Aorta (tissue), 5 donors: ENCODE measurements at regions of chr16 and their contacts with region 1.

Region 1: GRCh38 chr16:83433201-83433600 is 374.6 kb upstream of the HSBP1 start:
- DNase-seq: no peak
- ATAC-seq: no peak
- H3K4me3 ChIP-seq: no peak overlapping the region
- H3K27ac ChIP-seq: no peak overlapping the region
- H3K4me1 ChIP-seq: no peaks in the 10 kb centered on the region
- H3K27me3 ChIP-seq: no peaks in the 10 kb centered on the region

Region 2: DNA sequence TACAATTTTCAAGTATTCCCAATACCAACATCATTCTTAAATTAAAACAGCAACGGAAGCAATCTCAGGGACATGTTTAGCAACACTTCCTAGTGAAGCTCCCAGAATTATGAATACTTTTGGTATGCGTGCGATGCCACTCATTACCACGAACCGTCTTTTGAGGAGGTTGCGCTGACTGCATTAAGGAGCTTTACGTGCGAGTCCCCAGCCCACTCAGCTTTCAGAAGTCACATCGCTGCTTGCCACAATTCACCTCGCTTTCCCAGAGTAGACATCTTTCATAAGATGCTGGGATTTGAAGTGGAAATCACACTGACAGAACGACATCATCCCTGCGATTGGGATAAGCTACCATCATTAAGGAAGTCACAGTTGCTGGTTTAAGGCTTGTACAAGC is 67.0 kb before region 1 on chr16:
- intact Hi-C with region 1: loop called in 1 of 2 experiments (anchors 2 kb)
- DNase-seq: no peak
- ATAC-seq: no peak
- H3K4me3 ChIP-seq: no peak overlapping the region
- H3K27ac ChIP-seq: no peak overlapping the region
- H3K4me1 ChIP-seq: no peaks in the 10 kb centered on the region
- H3K27me3 ChIP-seq: no peaks in the 10 kb centered on the region

Region 3: DNA sequence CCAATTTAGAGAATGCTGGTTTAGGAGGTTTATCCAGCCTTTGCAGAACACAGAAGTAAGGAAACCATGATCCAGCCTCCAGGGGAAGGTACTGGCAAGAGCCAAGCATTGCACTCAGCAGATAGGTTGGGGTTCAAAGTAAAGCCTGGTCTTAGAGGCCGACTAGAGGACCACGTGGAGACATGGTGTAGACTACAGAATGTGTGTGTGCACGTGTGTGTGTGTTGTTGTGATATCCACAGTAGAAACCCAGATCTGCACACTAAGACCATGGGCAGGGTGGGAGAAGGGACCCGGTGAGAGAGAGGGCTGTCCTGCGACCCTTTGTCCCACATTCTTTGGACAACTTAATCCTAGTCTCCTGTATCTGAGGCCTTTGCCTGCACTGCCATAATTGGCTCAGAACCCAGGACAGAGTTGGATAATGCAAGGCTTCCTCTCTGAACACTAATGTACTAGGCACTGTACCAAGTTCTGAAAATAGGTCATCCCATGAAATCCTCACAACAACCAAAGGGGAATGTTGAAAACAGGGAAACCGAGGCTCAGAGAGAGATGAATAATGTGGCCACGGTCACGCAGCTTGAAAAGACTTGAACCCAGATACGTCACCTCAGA is 49.5 kb after region 1 on chr16:
- intact Hi-C with region 1: no loop called
- DNase-seq: no peak
- ATAC-seq: no peak
- H3K4me3 ChIP-seq: no peak overlapping the region
- H3K27ac ChIP-seq: no peak overlapping the region
- H3K4me1 ChIP-seq: no peaks in the 10 kb centered on the region
- H3K27me3 ChIP-seq: no peaks in the 10 kb centered on the region